GM10248 (cell line): ENCODE measurements at regions of chr12 and their contacts with region 1.

Region 1: DNA sequence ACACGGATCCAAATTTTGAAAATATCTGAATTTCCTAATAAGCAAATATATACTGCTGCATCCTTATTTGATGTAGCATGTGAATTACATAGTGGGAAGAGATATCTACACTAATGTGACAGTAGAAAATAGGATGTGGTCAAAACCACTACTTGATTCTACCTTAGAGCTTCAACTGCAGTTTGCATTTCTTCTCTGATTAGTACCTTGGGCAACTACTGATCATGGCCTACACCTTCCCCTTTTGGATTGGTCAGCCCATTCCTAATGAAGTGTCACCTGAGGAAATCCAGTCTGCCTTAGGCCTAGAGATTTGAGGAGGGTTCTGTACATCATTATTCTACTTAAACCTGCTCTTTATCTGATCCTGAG is 10.7 kb downstream of the LLPH start:
- DNase-seq: no peak
- CTCF ChIP-seq: no peak

Region 2: GRCh38 chr12:66107451-66107915 is 12.4 kb before region 1 on chr12:
- CTCF ChIA-PET with region 1: interaction called, 40 read pairs
- POLR2A ChIA-PET with region 1: no interaction called
- DNase-seq: peak; percentile 71
- CTCF ChIP-seq: peak; percentile 59